Activated CD8-positive, alpha-beta T cell treated with anti-CD3 and anti-CD28 coated beads for 36 hours (primary cell): ENCODE measurements at regions of chr17 and their contacts with region 1.

Region 1: GRCh38 chr17:29148790-29149430 is 31.3 kb downstream of the MYO18A start:
- DNase-seq: peak; percentile 97
- ATAC-seq: peak; percentile 97
- H3K4me3 Mint-ChIP-seq: peak overlapping the region; percentile 72
- H3K27ac Mint-ChIP-seq: peak overlapping the region; percentile 87
- H3K4me1 Mint-ChIP-seq: peaks cover 54% of the 10 kb centered on the region
- H3K27me3 Mint-ChIP-seq: no peaks in the 10 kb centered on the region
- CTCF ChIP-seq: peak; percentile 93

Region 2: GRCh38 chr17:29078183-29079045 is 70.5 kb before region 1 on chr17:
- CTCF ChIA-PET with region 1: no interaction called
- POLR2A ChIA-PET with region 1: no interaction called
- intact Hi-C with region 1: no loop called
- DNase-seq: no peak
- ATAC-seq: no peak
- H3K4me3 Mint-ChIP-seq: no peak overlapping the region
- H3K27ac Mint-ChIP-seq: no peak overlapping the region
- H3K4me1 Mint-ChIP-seq: no peaks in the 10 kb centered on the region
- H3K27me3 Mint-ChIP-seq: no peaks in the 10 kb centered on the region
- CTCF ChIP-seq: no peak

Region 3: DNA sequence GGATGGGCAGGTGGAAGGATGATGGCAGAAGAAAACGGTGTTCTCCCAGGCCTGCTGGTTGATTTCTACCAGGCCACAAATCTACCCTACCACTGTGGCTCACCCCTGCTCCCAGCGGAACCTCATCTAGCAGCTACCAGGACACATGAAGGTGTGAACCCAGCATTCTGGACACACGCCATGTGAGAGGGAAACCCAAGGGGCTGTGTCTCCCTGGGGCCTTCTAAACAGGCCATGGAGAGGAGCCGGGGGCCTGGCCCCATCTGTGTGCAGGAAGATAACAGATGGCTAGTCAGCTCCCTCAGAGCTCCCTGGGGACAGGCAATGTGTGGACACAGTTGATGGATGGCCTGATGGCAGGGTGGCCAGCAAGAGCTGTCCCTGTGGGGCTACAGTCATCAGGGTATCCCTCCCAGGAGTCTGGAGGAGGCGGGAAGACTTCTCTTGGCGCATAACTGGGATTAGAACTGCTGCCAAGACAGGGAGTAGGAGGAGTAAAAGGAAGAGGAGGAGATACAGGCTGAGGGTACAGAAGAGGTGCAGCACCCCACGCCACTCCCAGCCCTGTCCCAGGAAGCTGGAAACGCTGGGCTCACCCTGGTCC is 13.9 kb after region 1 on chr17:
- CTCF ChIA-PET with region 1: interaction called, 29 read pairs
- POLR2A ChIA-PET with region 1: no interaction called
- intact Hi-C with region 1: no loop called
- DNase-seq: no peak
- ATAC-seq: no peak
- H3K4me3 Mint-ChIP-seq: no peak overlapping the region
- H3K27ac Mint-ChIP-seq: no peak overlapping the region
- H3K4me1 Mint-ChIP-seq: peaks cover 9% of the 10 kb centered on the region
- H3K27me3 Mint-ChIP-seq: no peaks in the 10 kb centered on the region
- CTCF ChIP-seq: no peak

Region 4: DNA sequence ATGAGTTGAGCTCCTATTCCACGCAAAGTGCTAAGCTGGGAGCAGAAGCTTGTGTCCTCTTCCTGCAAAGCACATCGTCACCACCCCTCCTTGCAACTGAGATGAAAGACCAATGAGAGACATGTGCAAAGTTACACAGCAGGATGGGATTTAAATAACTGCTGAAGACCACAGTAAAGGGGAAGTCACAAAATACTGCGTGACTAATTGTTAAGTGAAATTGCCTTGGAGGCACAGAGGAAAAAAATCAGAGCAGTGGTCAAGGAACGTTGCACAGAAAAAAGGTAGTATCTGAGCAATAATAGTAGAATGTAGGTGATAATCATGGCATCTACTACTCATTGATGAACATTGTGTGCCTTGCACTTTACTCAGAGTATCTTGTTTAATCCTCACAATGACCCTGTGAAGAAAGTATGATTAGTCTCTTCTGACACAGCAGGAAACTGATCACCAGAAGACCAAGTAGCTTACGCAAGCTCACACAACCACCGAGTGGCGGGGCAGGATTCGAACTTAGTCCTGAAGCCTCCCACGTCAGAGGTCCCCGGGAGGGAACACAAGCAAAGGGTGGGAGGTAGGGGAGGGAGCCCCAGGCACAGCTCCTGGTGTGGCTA is 46.7 kb after region 1 on chr17:
- CTCF ChIA-PET with region 1: interaction called, 10 read pairs
- POLR2A ChIA-PET with region 1: no interaction called
- intact Hi-C with region 1: no loop called
- DNase-seq: peak; percentile 20
- ATAC-seq: peak; percentile 64
- H3K4me3 Mint-ChIP-seq: no peak overlapping the region
- H3K27ac Mint-ChIP-seq: no peak overlapping the region
- H3K4me1 Mint-ChIP-seq: peaks cover 7% of the 10 kb centered on the region
- H3K27me3 Mint-ChIP-seq: peaks cover 6% of the 10 kb centered on the region
- CTCF ChIP-seq: no peak

Region 5: GRCh38 chr17:29241015-29241963 is 92.4 kb after region 1 on chr17:
- CTCF ChIA-PET with region 1: interaction called, 14 read pairs
- POLR2A ChIA-PET with region 1: no interaction called
- intact Hi-C with region 1: no loop called
- DNase-seq: peak; percentile 30
- ATAC-seq: peak; percentile 91
- H3K4me3 Mint-ChIP-seq: no peak overlapping the region
- H3K27ac Mint-ChIP-seq: no peak overlapping the region
- H3K4me1 Mint-ChIP-seq: peaks cover 7% of the 10 kb centered on the region
- H3K27me3 Mint-ChIP-seq: no peaks in the 10 kb centered on the region
- CTCF ChIP-seq: no peak